G401 (cell line): ENCODE measurements at regions of chr22 and their contacts with region 1.

Region 1: GRCh38 chr22:23315341-23315917 is 135.1 kb downstream of the BCR start:
- DNase-seq: peak; percentile 69

Region 2: GRCh38 chr22:23192181-23192957 is 123.1 kb before region 1 on chr22:
- in situ Hi-C with region 1: no loop called
- DNase-seq: peak; percentile 93

Region 3: DNA sequence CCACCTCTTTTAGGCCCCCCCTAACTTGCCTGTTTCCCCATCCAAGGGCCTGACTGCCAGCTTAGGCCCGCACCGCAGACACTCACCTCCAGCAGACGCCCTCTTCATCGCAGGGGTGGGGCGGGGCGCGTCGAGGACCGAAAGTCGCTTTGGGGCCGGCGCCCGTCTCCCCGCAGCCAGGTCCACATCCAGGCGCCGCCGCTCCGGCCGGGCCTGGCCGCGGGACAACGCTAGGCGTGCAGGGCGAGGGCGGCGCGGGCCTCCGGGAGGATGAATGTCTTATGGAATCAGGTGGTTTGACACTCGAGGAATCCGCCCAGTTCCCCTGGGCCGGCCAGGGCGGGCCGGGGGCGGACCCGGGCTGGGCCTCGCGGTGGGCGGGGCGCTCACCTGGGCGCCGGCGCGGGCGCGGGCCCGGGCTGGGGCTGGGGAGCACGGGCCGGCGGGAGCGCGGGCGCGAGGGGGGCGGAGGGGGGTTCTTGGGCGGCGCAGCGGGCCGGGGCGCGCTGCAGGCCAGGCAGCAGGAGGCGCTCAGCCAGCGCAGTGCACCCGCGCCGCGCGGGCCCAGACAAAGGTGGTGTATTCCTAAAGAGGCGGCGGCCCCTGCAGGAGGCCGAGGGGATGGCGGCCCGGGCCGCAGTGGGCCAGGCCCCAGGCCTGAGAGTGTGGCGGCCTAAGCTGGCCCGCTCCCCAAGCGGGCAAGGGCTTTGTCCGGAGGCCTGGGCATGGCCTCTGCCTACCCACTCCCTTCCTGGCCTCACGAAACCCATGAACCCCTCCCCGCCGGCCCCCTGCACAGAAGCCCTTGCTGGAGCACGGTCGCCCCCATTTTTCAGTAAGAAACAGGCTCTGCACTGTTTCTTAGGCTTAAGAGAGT is 87.1 kb after region 1 on chr22:
- in situ Hi-C with region 1: loop called (anchors 25 kb)
- DNase-seq: peak; percentile 50